WTC11 (cell line): ENCODE measurements at regions of chr16 and their contacts with region 1.

Region 1: GRCh38 chr16:90019543-90020259 is 445 bp upstream of the DBNDD1 start:
- DNase-seq: peak; percentile 70
- ATAC-seq: peak; percentile 48
- H3K4me3 Mint-ChIP-seq: peak overlapping the region; percentile 82
- H3K27ac Mint-ChIP-seq: peak overlapping the region; percentile 97
- H3K4me1 Mint-ChIP-seq: peaks cover 34% of the 10 kb centered on the region
- H3K27me3 Mint-ChIP-seq: no peaks in the 10 kb centered on the region
- CTCF ChIP-seq: no peak

Region 2: GRCh38 chr16:89922884-89923690 is 96.6 kb before region 1 on chr16 and contains the start of gene TUBB3:
- CTCF ChIA-PET with region 1: interaction called, 20 read pairs
- POLR2A ChIA-PET with region 1: interaction called, 3 read pairs
- DNase-seq: peak; percentile 85
- ATAC-seq: peak; percentile 17
- H3K4me3 Mint-ChIP-seq: peak within 1 kb of the TSS; percentile 88
- H3K27ac Mint-ChIP-seq: no peak within 1 kb of the TSS
- H3K4me1 Mint-ChIP-seq: peaks cover 19% of the 10 kb centered on the region
- H3K27me3 Mint-ChIP-seq: peaks cover 36% of the 10 kb centered on the region
- CTCF ChIP-seq: no peak
- total RNA-seq, gene TUBB3: 150 to 209 TPM (median 163 TPM) in 3 replicates

Region 3: DNA sequence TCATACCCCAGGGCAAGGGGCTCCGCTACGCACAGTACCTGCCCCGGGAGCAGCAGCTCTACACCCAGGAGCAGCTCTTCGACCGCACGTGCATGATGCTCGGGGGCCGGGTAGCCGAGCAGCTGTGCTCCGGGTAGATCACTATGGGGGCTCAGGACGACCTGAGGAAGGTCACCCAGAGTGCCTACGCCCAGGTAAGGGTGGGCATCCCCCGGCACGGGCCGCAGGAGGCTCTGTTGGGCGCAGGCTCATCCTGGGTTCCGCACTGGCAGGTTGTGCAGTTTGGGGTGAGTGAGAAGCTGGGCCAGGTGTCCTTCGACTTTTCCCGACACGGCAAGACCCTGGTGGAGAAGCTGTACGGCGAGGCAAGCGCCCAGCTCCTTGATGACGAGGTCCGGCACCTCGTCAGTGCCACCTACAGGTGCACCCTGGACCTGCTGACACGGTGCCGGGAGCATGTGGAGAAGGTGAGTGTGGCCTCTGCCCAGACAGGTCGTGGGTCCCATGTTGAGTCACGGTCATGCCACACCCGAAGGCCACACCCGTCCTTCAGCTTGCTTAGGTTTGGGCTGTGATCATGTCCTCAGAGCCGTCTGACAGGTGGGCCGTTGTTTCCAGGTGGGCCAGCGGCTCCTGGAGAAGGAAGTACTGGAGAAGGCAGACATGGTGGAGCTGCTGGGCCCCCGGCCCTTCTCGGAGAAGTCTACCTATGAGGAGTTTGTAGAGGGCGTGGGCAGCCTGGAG is 19.7 kb before region 1 on chr16:
- CTCF ChIA-PET with region 1: interaction called, 17 read pairs
- POLR2A ChIA-PET with region 1: interaction called, 5 read pairs
- DNase-seq: no peak
- ATAC-seq: no peak
- H3K4me3 Mint-ChIP-seq: no peak overlapping the region
- H3K27ac Mint-ChIP-seq: peak overlapping the region; percentile 47; the same call in 1 of the 2 replicates
- H3K4me1 Mint-ChIP-seq: peaks cover 4% of the 10 kb centered on the region; the same call in 1 of the 2 replicates
- H3K27me3 Mint-ChIP-seq: peaks cover 8% of the 10 kb centered on the region; the same call in 1 of the 2 replicates
- CTCF ChIP-seq: no peak

Region 4: GRCh38 chr16:90046971-90047713 is 27.4 kb after region 1 on chr16:
- CTCF ChIA-PET with region 1: interaction called, 24 read pairs
- POLR2A ChIA-PET with region 1: interaction called, 8 read pairs
- DNase-seq: peak; percentile 29
- ATAC-seq: peak; percentile 21
- H3K4me3 Mint-ChIP-seq: peak overlapping the region; percentile 66
- H3K27ac Mint-ChIP-seq: no peak overlapping the region
- H3K4me1 Mint-ChIP-seq: peaks cover 10% of the 10 kb centered on the region
- H3K27me3 Mint-ChIP-seq: peaks cover 15% of the 10 kb centered on the region
- CTCF ChIP-seq: no peak

Region 5: DNA sequence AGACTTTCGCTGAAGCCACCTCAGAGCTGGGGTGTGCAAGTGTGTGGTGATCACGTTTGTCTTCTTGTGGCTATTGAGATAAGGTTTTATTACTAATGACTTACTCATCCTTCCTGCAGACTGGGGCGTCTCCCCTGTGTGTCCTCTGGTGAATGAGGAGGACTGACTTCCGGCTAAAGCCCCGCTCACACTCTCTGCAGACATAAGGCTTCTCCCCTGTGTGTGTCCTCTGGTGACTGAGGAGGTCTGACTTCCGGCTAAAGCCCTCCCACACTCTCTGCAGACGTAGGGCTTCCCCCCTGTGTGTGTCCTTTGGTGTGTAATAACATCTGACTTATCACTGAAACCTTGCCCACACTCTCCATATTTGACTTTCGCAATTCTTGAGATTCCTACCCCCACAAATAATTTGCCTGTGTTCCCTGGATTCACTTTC is 38.1 kb after region 1 on chr16:
- CTCF ChIA-PET with region 1: no interaction called
- POLR2A ChIA-PET with region 1: no interaction called
- DNase-seq: no peak
- ATAC-seq: no peak
- H3K4me3 Mint-ChIP-seq: no peak overlapping the region
- H3K27ac Mint-ChIP-seq: no peak overlapping the region
- H3K4me1 Mint-ChIP-seq: peaks cover 3% of the 10 kb centered on the region; the same call in 1 of the 2 replicates
- H3K27me3 Mint-ChIP-seq: peaks cover 70% of the 10 kb centered on the region
- CTCF ChIP-seq: no peak